ENCODE measurements at regions of chr7 and their contacts with region 1.

Region 1: GRCh38 chr7:143008007-143008901 is 18.7 kb downstream of the OR9A2 start:
- DNase-seq: peak; percentile 87
- ATAC-seq: peak; percentile 88

Region 2: GRCh38 chr7:142739923-142740492 is 268.2 kb before region 1 on chr7:
- intact Hi-C with region 1: no loop called
- DNase-seq: no peak
- ATAC-seq: no peak

Region 3: DNA sequence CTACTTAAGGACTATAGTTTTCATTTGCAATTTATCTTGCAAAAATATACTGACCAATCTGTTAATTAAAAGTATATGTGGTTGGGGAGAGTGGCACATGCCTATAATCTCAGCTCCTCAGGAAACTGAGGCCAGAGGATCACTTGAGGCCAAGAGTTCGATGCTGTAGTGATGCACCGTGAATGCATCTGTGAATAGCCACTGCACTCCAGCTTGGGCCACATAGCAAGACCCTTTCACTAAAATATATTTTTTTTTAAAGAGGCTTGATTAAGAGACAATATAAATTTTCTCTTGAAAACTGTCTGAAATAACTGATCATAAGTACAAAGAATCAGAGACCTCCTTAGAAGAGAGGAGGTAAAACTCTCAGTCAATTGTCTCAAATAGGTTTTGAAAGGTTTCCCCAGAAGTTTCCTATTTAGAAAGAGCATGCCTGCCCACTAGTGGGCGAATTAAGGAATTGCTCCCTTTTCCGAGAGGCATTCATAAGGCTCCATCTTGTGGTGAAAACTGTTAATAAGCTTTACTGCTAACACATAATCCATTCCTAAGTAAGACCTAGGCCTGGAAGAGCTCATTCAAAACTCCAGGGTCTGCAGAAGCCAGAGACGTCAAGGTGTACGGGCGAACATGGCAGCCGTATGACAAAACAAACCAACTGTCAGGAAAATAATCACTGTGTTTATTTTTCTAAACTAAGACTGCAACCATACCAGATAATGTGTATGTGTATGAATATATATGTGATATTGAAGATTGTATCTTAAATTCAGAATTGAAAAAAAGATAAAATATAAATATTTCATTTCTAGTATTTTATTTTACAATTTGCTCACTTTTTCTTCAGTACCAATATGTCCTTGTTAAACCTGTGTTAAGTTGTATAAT is 206.8 kb after region 1 on chr7:
- intact Hi-C with region 1: loop called (anchors 2 kb)
- DNase-seq: no peak
- ATAC-seq: peak; percentile 67

Region 4: DNA sequence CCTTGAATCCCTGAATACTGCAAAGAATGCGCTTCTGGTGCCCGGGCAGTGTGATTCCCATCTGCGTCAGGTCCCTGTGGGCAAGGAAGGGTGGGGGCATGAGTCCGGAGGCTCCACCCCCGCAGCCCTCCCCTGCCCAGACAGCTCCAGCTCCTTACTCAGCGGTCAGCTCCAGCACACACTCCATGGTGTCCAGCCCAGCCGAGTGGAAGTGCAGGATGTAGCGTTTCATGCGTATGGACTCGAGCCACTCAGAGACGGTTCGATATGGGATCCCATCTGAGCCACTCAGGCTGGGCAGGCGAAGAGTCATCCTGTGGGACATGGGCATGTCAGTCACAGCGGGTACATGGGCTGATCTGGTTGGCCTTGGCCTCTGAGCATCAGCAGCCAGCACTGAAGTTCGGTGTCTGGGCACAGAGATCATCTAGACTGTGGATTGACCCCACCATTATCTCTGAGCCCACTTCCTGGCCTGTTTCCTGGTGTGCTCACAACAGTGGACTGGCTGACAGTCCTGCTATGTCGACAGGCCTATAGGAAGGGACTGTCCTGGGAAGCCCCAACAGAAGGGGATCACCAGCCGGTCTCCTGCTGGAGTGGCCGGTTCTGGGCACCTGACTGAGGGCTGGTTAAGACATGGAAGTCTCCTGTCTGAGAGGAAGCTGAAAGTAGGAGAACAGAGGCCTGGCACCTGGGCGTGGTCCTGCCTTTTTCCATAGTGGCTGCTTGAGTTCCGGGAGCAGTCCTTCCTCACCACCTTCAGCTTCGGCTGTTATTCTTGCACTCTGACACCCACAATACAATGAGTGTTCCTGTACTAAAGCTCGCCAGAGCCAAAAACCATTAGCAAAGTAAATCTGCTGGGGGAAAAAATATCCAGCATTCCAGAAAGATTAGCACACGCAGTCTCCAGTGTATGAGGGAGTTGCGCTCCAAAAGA is 383.5 kb after region 1 on chr7:
- intact Hi-C with region 1: no loop called
- DNase-seq: peak; percentile 80
- ATAC-seq: peak; percentile 76